ENCODE measurements at regions of chr10 and their contacts with region 1.

Region 1: GRCh38 chr10:123380497-123381085 is 226.4 kb downstream of the BUB3 start:
- DNase-seq: peak; percentile 8
- H3K4me3 ChIP-seq: no peak overlapping the region
- H3K27ac ChIP-seq: no peak overlapping the region
- H3K4me1 ChIP-seq: no peaks in the 10 kb centered on the region
- H3K27me3 ChIP-seq: no peaks in the 10 kb centered on the region
- CTCF ChIP-seq: peak; percentile 36; the same call in 1 of the 2 replicates

Region 2: GRCh38 chr10:123043409-123043925 is 337.1 kb before region 1 on chr10:
- CTCF ChIA-PET with region 1: no interaction called
- POLR2A ChIA-PET with region 1: no interaction called
- intact Hi-C with region 1: loop called (anchors 5 kb)
- DNase-seq: peak; percentile 65
- H3K4me3 ChIP-seq: no peak overlapping the region
- H3K27ac ChIP-seq: no peak overlapping the region
- H3K4me1 ChIP-seq: no peaks in the 10 kb centered on the region
- H3K27me3 ChIP-seq: no peaks in the 10 kb centered on the region
- CTCF ChIP-seq: peak; percentile 79

Measured in A673 (cell line).